Mammary epithelial cell (primary cell): ENCODE measurements at regions of chr5 and their contacts with region 1.

Region 1: DNA sequence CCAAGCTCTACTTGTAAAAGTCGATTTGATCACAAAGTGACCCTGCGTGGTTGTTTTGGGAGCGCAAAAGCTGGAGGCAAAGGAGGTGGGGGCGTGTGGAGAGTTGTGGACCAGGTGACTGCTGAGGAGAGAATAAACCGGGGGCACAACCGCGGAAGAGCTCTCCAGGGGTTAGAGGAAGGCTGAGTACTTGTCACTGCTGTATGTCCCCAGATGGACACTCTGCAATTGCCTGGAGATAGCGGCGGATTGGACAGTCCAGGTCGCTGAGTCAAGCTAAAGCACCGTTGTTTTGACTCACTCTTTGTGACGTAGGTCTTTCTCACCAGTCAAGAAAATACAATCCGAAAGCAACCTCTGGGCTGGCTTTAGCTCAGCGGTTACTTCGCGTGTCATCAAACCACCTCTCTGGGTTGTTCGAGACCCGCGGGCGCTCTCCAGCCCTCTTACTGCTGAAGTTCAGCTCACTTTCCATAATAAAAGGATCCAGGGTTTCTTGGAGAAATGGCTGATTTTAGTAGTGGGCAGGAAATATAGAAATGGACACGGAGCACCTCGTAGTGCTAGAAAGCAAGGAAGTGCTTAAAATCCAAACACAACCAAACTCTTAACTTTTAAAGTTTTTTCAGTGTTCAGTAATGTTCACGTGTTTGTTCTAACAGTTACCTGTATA is 25.7 kb downstream of the ZMAT2 start:
- DNase-seq: peak; percentile 97
- H3K4me3 ChIP-seq: peak overlapping the region; percentile 22 to 50 (median 46)
- H3K27ac ChIP-seq: no peak overlapping the region
- H3K4me1 ChIP-seq: no peaks in the 10 kb centered on the region
- H3K27me3 ChIP-seq: no peaks in the 10 kb centered on the region
- CTCF ChIP-seq: no peak

Region 2: DNA sequence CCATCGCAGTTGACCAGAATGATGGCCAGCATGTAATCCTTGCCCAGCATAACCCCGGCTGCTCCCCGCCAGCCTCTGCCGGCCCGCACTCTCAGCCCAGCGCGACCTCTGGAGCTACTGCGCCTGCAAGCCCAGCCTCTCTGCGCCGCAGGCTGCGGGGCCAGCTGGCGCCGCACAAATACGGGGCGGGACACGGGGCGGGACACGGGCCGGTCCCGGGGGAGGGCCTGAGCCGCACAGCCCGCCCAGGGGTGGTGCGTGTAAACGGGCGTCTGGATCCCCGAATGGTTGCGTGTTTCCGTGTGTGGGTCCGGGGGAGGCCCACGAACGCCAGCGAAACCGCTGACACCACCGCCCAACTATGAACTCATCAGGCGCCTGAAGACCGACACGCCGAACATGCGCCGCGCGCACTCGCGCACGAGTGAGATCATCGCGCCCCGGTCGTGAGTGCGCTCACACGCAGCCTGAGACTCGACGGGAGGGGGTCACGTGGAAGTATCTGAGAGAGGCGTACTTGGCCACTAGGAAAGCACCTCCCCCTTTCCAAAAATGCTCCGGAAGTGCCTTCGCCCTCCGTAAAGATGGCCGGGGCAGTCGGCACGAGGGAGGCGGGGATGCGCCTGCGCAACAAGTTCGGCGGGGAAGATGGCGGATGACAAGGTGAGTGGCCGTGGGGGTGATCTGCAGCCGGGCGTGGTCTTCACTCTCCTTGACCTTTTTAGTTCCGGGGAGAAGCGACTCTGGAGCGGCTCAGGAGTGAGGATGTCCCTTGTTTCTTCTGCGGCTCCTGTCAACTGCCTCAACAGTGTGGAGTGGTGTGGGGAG is 161.5 kb before region 1 on chr5 and contains the starts of genes APBB3 and SLC35A4:
- CTCF ChIA-PET with region 1: no interaction called
- dilution Hi-C with region 1: no loop called
- in situ Hi-C with region 1: loop called in 1 of 2 experiments (anchors 10 kb)
- intact Hi-C with region 1: no loop called
- DNase-seq: peak; percentile 96
- H3K4me3 ChIP-seq: peak within 1 kb of the TSS; percentile 88 to 92 (median 90)
- H3K27ac ChIP-seq: peak within 1 kb of the TSS; percentile 82
- H3K4me1 ChIP-seq: peaks cover 18% of the 10 kb centered on the region
- H3K27me3 ChIP-seq: no peaks in the 10 kb centered on the region
- CTCF ChIP-seq: no peak
- total RNA-seq, gene APBB3: 12.2 to 18.4 TPM
- total RNA-seq, gene SLC35A4: 24.0 to 62.2 TPM

Region 3: DNA sequence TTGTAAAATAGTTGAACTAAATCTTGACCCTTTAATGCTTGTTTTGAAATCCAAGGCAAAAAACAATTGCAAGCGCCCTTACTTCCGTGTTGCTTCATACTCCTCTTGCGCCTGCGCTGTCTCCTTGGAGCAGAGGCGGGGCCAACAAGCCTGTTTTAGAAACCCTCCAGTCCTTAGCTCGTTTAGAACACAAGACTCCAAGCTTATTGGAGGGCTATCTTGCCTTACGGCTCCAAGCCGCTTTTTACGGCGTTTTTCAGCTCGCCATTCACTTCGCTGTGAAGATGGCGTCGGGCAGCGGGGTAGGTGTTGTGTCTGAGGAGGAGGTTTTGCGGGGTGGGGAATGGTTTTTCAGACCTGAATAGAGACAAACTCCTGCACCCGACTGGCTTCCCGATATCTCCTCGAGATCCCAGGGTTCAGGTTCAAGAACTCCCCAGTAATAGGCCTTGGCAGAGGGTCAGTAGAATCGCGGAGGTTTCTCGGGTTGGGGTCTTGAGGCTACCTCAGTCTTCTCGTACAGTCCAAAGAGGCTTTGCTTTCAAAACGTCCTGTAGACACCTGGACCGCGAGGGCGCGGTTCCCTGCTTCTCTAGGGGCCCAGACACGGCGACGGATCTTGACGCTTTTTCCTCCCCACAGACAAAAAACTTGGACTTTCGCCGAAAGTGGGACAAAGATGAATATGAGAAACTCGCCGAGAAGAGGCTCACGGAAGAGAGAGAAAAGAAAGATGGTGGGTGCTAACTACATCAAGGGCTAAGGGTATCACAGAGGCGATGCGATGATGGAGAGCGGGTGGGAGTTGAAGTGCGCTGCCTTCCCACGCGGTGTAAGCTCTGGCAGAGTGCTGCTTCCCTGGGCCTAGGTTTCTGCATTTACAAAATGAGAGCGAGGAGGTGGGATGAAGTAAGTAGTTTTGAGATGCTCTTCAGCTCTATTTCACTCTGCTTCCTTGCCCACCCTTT is 25.5 kb before region 1 on chr5 and contains the start of gene ZMAT2:
- CTCF ChIA-PET with region 1: no interaction called
- dilution Hi-C with region 1: no loop called
- in situ Hi-C with region 1: no loop called
- intact Hi-C with region 1: no loop called
- DNase-seq: peak; percentile 96
- H3K4me3 ChIP-seq: peak within 1 kb of the TSS; percentile 48 to 89 (median 77)
- H3K27ac ChIP-seq: peak within 1 kb of the TSS; percentile 67
- H3K4me1 ChIP-seq: peaks cover 7% of the 10 kb centered on the region
- H3K27me3 ChIP-seq: no peaks in the 10 kb centered on the region
- CTCF ChIP-seq: no peak
- total RNA-seq, gene ZMAT2: 25.8 to 44.5 TPM